ENCODE measurements at regions of chr1 and their contacts with region 1.

Region 1: GRCh38 chr1:245888809-245889208 is 618.3 kb downstream of the SMYD3 start:
- DNase-seq: peak; percentile 21
- ATAC-seq: peak; percentile 90
- H3K4me3 Mint-ChIP-seq: no peak overlapping the region
- H3K27ac Mint-ChIP-seq: no peak overlapping the region
- H3K4me1 Mint-ChIP-seq: peaks cover 3% of the 10 kb centered on the region; the same call in 1 of the 2 replicates
- H3K27me3 Mint-ChIP-seq: peaks cover 3% of the 10 kb centered on the region; the same call in 1 of the 2 replicates
- CTCF ChIP-seq: no peak

Region 2: DNA sequence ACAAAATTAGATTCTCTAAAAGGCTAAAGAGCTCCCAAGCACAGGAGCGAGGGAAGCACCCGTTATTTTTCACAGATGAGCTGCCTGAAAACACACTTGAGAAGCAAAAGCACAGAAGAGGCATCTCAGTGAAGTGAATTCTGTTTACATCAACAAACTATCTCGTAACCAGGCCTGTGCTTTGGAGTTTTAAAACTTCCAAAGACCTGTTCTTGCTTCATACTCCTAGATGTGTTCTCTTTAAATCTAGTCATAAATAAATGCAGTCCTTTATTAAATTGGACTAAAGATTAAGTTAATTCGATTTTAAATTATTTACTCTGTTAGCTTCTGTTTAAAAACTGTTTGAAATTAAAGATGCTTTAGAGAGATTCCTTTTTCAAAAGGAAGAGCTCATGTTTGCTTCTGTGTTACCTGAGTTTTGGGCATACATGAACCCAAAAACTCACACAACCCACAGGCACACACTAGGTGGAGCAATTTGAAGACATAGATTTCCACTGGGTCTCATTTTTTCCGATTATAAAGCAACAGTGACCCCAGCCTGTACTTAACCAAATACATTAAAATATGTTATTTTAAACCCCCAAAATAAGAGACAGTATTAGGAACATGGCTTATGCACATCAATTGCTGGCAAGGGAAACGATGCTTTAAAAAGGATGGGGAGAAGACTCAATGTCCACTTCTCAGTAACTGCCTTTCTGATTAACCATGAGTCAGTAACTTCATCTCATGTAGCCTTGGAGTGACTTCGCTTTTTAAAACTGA is 29.9 kb before region 1 on chr1:
- CTCF ChIA-PET with region 1: interaction called, 15 read pairs
- POLR2A ChIA-PET with region 1: no interaction called
- DNase-seq: no peak
- ATAC-seq: no peak
- H3K4me3 Mint-ChIP-seq: no peak overlapping the region
- H3K27ac Mint-ChIP-seq: no peak overlapping the region
- H3K4me1 Mint-ChIP-seq: peaks cover 25% of the 10 kb centered on the region
- H3K27me3 Mint-ChIP-seq: no peaks in the 10 kb centered on the region
- CTCF ChIP-seq: no peak

Region 3: GRCh38 chr1:245874942-245875580 is 13.7 kb before region 1 on chr1:
- CTCF ChIA-PET with region 1: interaction called, 29 read pairs
- POLR2A ChIA-PET with region 1: no interaction called
- DNase-seq: no peak
- ATAC-seq: no peak
- H3K4me3 Mint-ChIP-seq: no peak overlapping the region
- H3K27ac Mint-ChIP-seq: no peak overlapping the region
- H3K4me1 Mint-ChIP-seq: no peaks in the 10 kb centered on the region
- H3K27me3 Mint-ChIP-seq: no peaks in the 10 kb centered on the region
- CTCF ChIP-seq: no peak

Region 4: DNA sequence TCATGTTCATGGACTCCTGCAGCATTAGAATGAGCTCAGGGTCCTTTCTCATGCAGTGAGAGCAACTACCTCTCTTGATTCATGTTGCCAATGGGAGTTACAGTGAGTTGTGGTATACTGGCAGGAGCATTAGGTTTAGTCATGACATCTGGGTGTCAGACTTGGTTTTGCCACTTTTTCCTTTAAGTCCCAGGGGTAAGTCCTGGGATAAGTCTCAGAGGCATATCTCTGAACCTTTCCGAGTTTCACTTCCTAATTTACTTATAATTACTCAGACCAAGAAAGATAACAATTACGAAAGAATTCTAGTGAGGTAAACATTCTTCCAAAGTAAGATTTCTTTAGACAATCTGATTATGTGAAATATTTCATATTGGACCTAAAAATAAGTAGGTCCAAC is 12.2 kb after region 1 on chr1:
- CTCF ChIA-PET with region 1: interaction called, 14 read pairs
- POLR2A ChIA-PET with region 1: no interaction called
- DNase-seq: no peak
- ATAC-seq: no peak
- H3K4me3 Mint-ChIP-seq: no peak overlapping the region
- H3K27ac Mint-ChIP-seq: no peak overlapping the region
- H3K4me1 Mint-ChIP-seq: peaks cover 7% of the 10 kb centered on the region
- H3K27me3 Mint-ChIP-seq: no peaks in the 10 kb centered on the region
- CTCF ChIP-seq: no peak

Region 5: GRCh38 chr1:245906207-245906606 is 17.4 kb after region 1 on chr1:
- CTCF ChIA-PET with region 1: interaction called, 14 read pairs
- POLR2A ChIA-PET with region 1: no interaction called
- DNase-seq: no peak
- ATAC-seq: no peak
- H3K4me3 Mint-ChIP-seq: no peak overlapping the region
- H3K27ac Mint-ChIP-seq: no peak overlapping the region
- H3K4me1 Mint-ChIP-seq: peaks cover 7% of the 10 kb centered on the region
- H3K27me3 Mint-ChIP-seq: no peaks in the 10 kb centered on the region
- CTCF ChIP-seq: no peak

Region 6: DNA sequence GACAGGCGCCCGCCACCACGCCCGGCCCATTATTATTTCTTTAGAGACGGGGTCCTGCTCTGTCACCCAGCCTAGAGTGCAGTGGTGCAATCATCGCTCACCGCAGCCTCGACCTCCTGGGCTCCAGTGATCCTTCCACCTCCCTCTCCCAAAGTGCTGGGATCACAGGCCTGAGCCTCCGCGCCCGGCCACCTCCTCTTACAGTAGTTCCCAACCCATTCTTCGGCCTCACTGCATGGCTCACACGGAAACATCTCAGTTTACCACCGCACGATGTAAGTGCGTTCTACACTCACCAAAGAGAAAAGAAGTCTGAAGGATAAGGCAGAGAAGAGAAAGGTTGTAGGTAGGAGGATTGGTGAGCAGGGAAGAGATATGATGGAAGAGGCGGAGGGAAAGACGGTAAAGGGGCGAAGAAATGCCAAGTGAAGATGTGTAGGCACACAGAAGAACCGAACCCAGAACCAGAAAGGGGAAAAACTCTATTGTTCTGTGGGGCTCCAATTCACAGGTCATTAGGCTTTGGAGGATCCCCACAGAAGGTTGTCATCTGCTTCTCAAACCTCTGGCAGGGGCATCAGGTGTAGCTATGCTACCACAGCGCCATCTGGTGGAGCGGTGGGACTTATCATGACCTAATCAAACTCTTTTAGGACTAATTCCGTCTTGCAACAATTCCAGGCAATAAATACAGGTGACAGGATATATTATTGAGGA is 114.1 kb after region 1 on chr1:
- CTCF ChIA-PET with region 1: interaction called, 14 read pairs
- POLR2A ChIA-PET with region 1: no interaction called
- DNase-seq: peak; percentile 93
- ATAC-seq: peak; percentile 91
- H3K4me3 Mint-ChIP-seq: no peak overlapping the region
- H3K27ac Mint-ChIP-seq: peak overlapping the region; percentile 48; the same call in 1 of the 2 replicates
- H3K4me1 Mint-ChIP-seq: peaks cover 7% of the 10 kb centered on the region
- H3K27me3 Mint-ChIP-seq: no peaks in the 10 kb centered on the region
- CTCF ChIP-seq: peak; percentile 71

Region 7: DNA sequence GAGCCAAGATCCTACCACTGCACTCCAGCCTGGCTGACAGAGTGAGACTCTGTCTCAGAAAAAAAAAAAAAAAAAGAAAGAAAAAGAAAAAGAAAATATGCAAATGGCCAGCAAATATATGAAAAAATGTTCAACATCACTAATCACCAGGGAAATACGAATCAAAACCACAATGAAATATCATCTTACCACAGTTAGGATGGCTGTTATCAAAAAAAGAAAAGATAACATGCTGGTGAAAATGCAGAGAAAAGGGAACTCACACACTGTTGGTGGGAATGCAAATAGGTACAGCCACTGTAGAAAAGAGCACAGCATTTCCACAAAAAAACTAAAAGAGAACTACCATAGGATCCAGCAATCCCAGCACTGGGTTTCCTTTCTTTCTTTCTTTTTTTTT is 140.8 kb after region 1 on chr1:
- CTCF ChIA-PET with region 1: no interaction called
- POLR2A ChIA-PET with region 1: no interaction called
- DNase-seq: no peak
- ATAC-seq: no peak
- H3K4me3 Mint-ChIP-seq: no peak overlapping the region
- H3K27ac Mint-ChIP-seq: no peak overlapping the region
- H3K4me1 Mint-ChIP-seq: no peaks in the 10 kb centered on the region
- H3K27me3 Mint-ChIP-seq: no peaks in the 10 kb centered on the region
- CTCF ChIP-seq: no peak